OCI-LY7 (cell line): ENCODE measurements at regions of chr2 and their contacts with region 1.

Region 1: GRCh38 chr2:121530212-121530705 is 421 bp upstream of the RNU4ATAC start:
- DNase-seq: peak; percentile 85
- H3K4me3 ChIP-seq: peak overlapping the region; percentile 92
- H3K27ac ChIP-seq: peak overlapping the region; percentile 94
- H3K4me1 ChIP-seq: peaks cover 37% of the 10 kb centered on the region
- CTCF ChIP-seq: no peak

Region 2: GRCh38 chr2:120210262-120210693 is 1320.0 kb before region 1 on chr2:
- CTCF ChIA-PET with region 1: no interaction called
- POLR2A ChIA-PET with region 1: no interaction called
- intact Hi-C with region 1: no loop called
- DNase-seq: no peak
- H3K4me3 ChIP-seq: no peak overlapping the region
- H3K27ac ChIP-seq: no peak overlapping the region
- H3K4me1 ChIP-seq: no peaks in the 10 kb centered on the region
- CTCF ChIP-seq: no peak

Region 3: GRCh38 chr2:121400201-121400600 is 130.1 kb before region 1 on chr2:
- CTCF ChIA-PET with region 1: no interaction called
- POLR2A ChIA-PET with region 1: no interaction called
- intact Hi-C with region 1: loop called (anchors 2 kb)
- DNase-seq: no peak
- H3K4me3 ChIP-seq: no peak overlapping the region
- H3K27ac ChIP-seq: no peak overlapping the region
- H3K4me1 ChIP-seq: no peaks in the 10 kb centered on the region
- CTCF ChIP-seq: no peak

Region 4: GRCh38 chr2:121455446-121455845 is 74.8 kb before region 1 on chr2:
- CTCF ChIA-PET with region 1: no interaction called
- POLR2A ChIA-PET with region 1: no interaction called
- intact Hi-C with region 1: no loop called
- DNase-seq: no peak
- H3K4me3 ChIP-seq: no peak overlapping the region
- H3K27ac ChIP-seq: no peak overlapping the region
- H3K4me1 ChIP-seq: no peaks in the 10 kb centered on the region
- CTCF ChIP-seq: no peak

Region 5: GRCh38 chr2:121547646-121548045 is 17.4 kb after region 1 on chr2:
- CTCF ChIA-PET with region 1: interaction called, 6 read pairs
- POLR2A ChIA-PET with region 1: interaction called, 13 read pairs
- intact Hi-C with region 1: no loop called
- DNase-seq: peak; percentile 41
- H3K4me3 ChIP-seq: no peak overlapping the region
- H3K27ac ChIP-seq: peak overlapping the region; percentile 28
- H3K4me1 ChIP-seq: peaks cover 20% of the 10 kb centered on the region
- CTCF ChIP-seq: no peak

Region 6: GRCh38 chr2:121649596-121650314 is 119.5 kb after region 1 on chr2:
- CTCF ChIA-PET with region 1: no interaction called
- POLR2A ChIA-PET with region 1: interaction called, 55 read pairs
- intact Hi-C with region 1: loop called (anchors 1 kb)
- DNase-seq: peak; percentile 97
- H3K4me3 ChIP-seq: peak overlapping the region; percentile 90
- H3K27ac ChIP-seq: peak overlapping the region; percentile 85
- H3K4me1 ChIP-seq: peaks cover 38% of the 10 kb centered on the region
- CTCF ChIP-seq: no peak

Region 7: GRCh38 chr2:121804340-121804739 is 274.1 kb after region 1 on chr2:
- CTCF ChIA-PET with region 1: no interaction called
- POLR2A ChIA-PET with region 1: interaction called, 4 read pairs
- intact Hi-C with region 1: loop called (anchors 2 kb)
- DNase-seq: peak; percentile 89
- H3K4me3 ChIP-seq: peak overlapping the region; percentile 45
- H3K27ac ChIP-seq: peak overlapping the region; percentile 78
- H3K4me1 ChIP-seq: peaks cover 35% of the 10 kb centered on the region
- CTCF ChIP-seq: no peak